ENCODE measurements at regions of chr20 and their contacts with region 1.

Region 1: DNA sequence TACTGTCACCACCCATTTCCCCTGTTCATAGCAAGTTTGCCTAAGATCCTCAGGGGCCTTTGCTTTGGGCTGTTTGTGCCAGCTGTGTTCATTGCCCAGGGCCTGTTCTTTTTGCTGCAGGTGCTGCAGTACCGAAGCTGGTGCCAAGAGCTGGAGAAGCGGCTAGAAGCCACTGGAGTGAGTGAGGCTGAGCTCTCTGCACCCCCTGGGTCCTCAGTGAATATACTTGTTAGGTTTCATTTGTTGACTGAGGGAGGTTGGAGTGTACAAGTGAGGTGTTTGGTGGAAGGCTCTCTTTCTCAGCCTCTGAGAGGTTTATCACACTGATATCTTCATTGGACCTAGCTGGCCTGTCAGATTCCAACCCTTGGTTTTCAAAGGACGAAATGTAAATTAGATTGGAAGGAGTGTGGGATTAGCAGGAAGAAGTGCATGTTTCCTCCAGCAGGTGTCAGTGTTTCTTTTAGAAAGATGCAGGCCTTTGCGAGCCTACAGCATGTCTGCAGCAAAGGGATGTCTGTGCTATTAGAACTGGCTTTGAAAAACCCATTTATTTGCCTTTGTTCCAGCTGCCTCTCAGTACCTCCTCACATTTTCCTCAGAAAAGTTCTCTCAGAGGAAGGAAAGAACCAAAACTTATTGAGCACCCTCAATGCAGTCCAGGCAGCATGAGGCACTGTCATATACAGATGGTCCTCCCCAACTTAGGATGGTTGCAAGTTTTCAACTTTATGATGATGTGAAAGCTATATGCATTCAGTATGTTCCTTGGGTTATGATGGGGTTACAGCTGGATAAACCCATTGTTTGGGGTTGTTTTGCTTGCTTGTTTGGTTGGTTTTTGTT is 8.3 kb downstream of the CEP250 start:
- DNase-seq: no peak
- ATAC-seq: peak; percentile 99
- H3K4me3 ChIP-seq: no peak overlapping the region
- H3K27ac ChIP-seq: no peak overlapping the region
- H3K4me1 ChIP-seq: no peaks in the 10 kb centered on the region
- H3K27me3 ChIP-seq: no peaks in the 10 kb centered on the region
- CTCF ChIP-seq: peak; percentile 74 to 84 (median 83)
- EP300 ChIP-seq: no peak
- POLR2A ChIP-seq: no peak
- RAD21 ChIP-seq: peak; percentile 80

Region 2: GRCh38 chr20:35447082-35447789 is 16.4 kb before region 1 on chr20:
- CTCF ChIA-PET with region 1: interaction called, 56 read pairs
- POLR2A ChIA-PET with region 1: no interaction called
- RAD21 ChIA-PET with region 1: no interaction called
- SMC1A ChIA-PET with region 1: interaction called, 3 read pairs
- in situ Hi-C with region 1: no loop called
- intact Hi-C with region 1: no loop called
- DNase-seq: peak; percentile 40
- ATAC-seq: peak; percentile 99
- H3K4me3 ChIP-seq: peak overlapping the region; percentile 80
- H3K27ac ChIP-seq: no peak overlapping the region
- H3K4me1 ChIP-seq: no peaks in the 10 kb centered on the region; the same call in 1 of the 2 replicates
- H3K27me3 ChIP-seq: no peaks in the 10 kb centered on the region
- CTCF ChIP-seq: peak; percentile 76 to 98 (median 93)
- EP300 ChIP-seq: no peak
- POLR2A ChIP-seq: no peak
- RAD21 ChIP-seq: peak; percentile 62

Region 3: DNA sequence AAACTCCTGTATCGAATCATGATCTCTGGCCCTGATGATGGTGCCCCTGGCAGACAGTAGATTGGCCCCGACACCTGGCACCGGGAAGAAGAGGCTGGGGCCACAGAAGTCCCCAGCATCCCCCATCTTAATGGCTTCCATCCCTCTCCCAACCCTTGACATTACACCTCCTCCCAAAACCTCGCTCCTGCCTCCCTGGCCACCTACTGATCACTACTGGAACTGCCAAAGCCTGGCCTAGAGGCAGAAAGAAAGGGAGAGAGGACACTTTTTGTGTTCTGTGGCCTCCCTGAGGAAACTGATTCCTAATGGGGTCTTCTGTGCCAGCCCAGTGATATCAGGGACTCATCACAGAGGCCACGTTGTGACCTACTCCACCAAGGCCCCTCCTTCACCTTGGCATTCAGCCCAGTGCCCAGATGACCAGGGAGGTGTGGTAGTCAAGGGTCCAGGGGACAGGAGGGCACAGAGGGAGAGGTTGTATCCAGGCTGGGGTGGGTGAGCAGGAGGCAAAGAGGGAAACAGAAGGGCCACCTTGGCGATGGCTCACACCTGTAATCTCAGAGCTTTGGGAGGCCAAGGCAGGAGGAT is 59.7 kb after region 1 on chr20:
- CTCF ChIA-PET with region 1: no interaction called
- POLR2A ChIA-PET with region 1: no interaction called
- RAD21 ChIA-PET with region 1: no interaction called
- SMC1A ChIA-PET with region 1: no interaction called
- in situ Hi-C with region 1: no loop called
- intact Hi-C with region 1: loop called (anchors 5 kb)
- DNase-seq: no peak
- ATAC-seq: peak; percentile 84
- H3K4me3 ChIP-seq: no peak overlapping the region
- H3K27ac ChIP-seq: no peak overlapping the region
- H3K4me1 ChIP-seq: no peaks in the 10 kb centered on the region
- H3K27me3 ChIP-seq: no peaks in the 10 kb centered on the region
- CTCF ChIP-seq: peak; percentile 40 to 76 (median 68)
- EP300 ChIP-seq: no peak
- POLR2A ChIP-seq: no peak
- RAD21 ChIP-seq: peak; percentile 57

Region 4: GRCh38 chr20:35601008-35601973 is 137.6 kb after region 1 on chr20:
- CTCF ChIA-PET with region 1: interaction called, 27 read pairs
- POLR2A ChIA-PET with region 1: no interaction called
- RAD21 ChIA-PET with region 1: interaction called, 3 read pairs
- SMC1A ChIA-PET with region 1: interaction called, 6 read pairs
- in situ Hi-C with region 1: no loop called
- intact Hi-C with region 1: no loop called
- DNase-seq: no peak
- ATAC-seq: peak; percentile 86
- H3K4me3 ChIP-seq: peak overlapping the region; percentile 57; the same call in 1 of the 2 replicates
- H3K27ac ChIP-seq: no peak overlapping the region
- H3K4me1 ChIP-seq: peaks cover 10% of the 10 kb centered on the region
- H3K27me3 ChIP-seq: peaks cover 9 to 11% of the 10 kb centered on the region in 2 experiments; a peak in 3 of 4 replicates
- CTCF ChIP-seq: peak; percentile 30 to 76 (median 49); a peak in 5 of 6 replicates
- EP300 ChIP-seq: no peak
- POLR2A ChIP-seq: no peak
- RAD21 ChIP-seq: peak; percentile 60

Region 5: GRCh38 chr20:35619196-35620095 is 155.8 kb after region 1 on chr20:
- CTCF ChIA-PET with region 1: interaction called, 8 read pairs
- POLR2A ChIA-PET with region 1: no interaction called
- RAD21 ChIA-PET with region 1: interaction called, 4 read pairs
- SMC1A ChIA-PET with region 1: interaction called, 7 read pairs
- in situ Hi-C with region 1: no loop called
- intact Hi-C with region 1: loop called (anchors 10 kb)
- DNase-seq: peak; percentile 45
- ATAC-seq: peak; percentile 69
- H3K4me3 ChIP-seq: peak overlapping the region; percentile 99
- H3K27ac ChIP-seq: no peak overlapping the region
- H3K4me1 ChIP-seq: peaks cover 25% of the 10 kb centered on the region
- H3K27me3 ChIP-seq: no peaks in the 10 kb centered on the region
- CTCF ChIP-seq: peak; percentile 74 to 87 (median 77)
- EP300 ChIP-seq: no peak
- POLR2A ChIP-seq: peak; percentile 61
- RAD21 ChIP-seq: peak; percentile 50

Region 6: DNA sequence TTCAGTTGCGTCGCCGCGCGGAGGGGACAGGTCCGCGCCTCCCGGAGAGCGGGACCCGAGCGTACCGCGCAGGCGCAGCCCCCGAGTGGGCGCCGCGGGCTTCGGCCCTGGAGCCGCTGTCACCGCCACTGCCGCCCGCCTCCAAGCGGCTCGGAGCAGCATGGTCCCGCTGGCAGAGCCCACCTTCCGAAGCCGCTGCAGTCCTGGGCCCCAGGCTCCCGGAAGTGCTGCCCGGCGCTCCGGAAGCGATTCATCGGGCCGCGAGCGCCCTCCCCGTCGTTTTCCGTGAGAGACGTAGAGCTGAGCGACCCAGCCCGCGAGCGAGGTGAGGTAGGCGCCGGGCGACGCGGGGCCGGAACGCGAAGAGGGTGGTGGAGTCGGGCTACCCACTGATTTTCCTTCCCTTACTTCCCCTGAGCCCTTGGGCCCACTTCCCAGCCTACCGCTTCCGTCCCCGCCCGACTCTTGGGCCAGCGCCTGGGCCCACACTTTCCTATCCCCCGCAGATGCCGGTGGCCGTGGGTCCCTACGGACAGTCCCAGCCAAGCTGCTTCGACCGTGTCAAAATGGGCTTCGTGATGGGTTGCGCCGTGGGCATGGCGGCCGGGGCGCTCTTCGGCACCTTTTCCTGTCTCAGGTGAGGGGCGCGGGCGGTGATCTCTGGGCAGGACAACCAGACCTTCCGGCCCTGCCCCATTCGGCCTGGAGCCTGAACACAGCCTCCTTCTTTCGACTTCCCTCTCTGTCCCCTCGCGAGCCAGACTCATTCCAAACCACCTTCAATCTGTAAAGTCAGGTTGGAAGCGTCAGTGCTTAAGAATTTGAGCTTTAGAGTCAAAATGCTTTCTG is 235.7 kb after region 1 on chr20 and contains the starts of genes NFS1 and ROMO1:
- CTCF ChIA-PET with region 1: interaction called, 3 read pairs
- POLR2A ChIA-PET with region 1: no interaction called
- RAD21 ChIA-PET with region 1: no interaction called
- SMC1A ChIA-PET with region 1: interaction called, 3 read pairs
- in situ Hi-C with region 1: no loop called
- intact Hi-C with region 1: loop called (anchors 2 kb)
- DNase-seq: peak; percentile 36
- ATAC-seq: peak; percentile 93
- H3K4me3 ChIP-seq: peak within 1 kb of the TSS; percentile 71
- H3K27ac ChIP-seq: peak within 1 kb of the TSS; percentile 87
- H3K4me1 ChIP-seq: peaks cover 11% of the 10 kb centered on the region; the same call in 1 of the 2 replicates
- H3K27me3 ChIP-seq: no peaks in the 10 kb centered on the region
- CTCF ChIP-seq: peak; percentile 13 to 24 (median 18); a peak in 3 of 6 replicates
- EP300 ChIP-seq: no peak
- POLR2A ChIP-seq: peak; percentile 90
- RAD21 ChIP-seq: no peak
- polyA plus RNA-seq, gene NFS1: 9.2 to 17.8 TPM
- polyA plus RNA-seq, gene ROMO1: 565 to 631 TPM

Region 7: DNA sequence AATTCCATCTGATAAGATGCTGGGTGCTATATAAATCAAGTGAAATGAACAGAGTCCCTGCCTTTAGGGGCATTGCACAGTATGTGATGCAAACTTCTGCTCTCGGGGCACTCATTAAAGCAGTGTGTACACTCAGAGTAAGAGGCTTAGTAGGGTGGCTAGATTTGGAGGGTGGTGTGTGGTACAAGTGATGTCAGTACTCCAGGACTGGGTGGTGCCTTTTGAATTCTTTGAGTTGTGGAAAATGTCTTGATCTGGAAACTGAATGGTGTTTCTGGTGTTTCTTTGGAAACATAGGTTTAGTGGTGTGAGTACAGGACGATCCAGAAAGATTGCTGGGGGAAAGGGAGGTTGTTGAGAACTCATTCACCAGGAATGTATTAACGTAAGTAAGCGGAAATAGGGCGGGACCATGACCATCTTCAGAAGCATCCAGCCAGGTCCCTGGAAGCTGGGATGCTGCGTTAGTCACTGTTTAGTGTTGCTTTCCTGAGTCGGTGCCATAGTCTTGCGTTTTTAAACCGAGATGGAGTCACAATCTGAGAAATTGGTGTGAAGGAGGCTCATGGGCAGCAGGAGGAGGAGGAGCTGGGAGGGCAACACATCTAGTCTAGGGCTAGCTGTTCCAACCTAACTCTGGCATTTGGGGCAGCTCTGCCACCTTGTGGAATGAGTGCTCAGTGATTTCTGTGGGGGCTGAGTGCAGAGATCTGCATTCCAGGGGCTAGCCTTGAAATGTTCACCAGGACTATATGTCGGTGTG is 420.3 kb after region 1 on chr20:
- CTCF ChIA-PET with region 1: interaction called, 26 read pairs
- POLR2A ChIA-PET with region 1: no interaction called
- RAD21 ChIA-PET with region 1: interaction called, 5 read pairs
- SMC1A ChIA-PET with region 1: interaction called, 4 read pairs
- in situ Hi-C with region 1: no loop called
- intact Hi-C with region 1: loop called (anchors 5 kb)
- DNase-seq: no peak
- ATAC-seq: peak; percentile 97
- H3K4me3 ChIP-seq: no peak overlapping the region
- H3K27ac ChIP-seq: no peak overlapping the region
- H3K4me1 ChIP-seq: no peaks in the 10 kb centered on the region
- H3K27me3 ChIP-seq: no peaks in the 10 kb centered on the region
- CTCF ChIP-seq: peak; percentile 66 to 82 (median 77)
- EP300 ChIP-seq: no peak
- POLR2A ChIP-seq: no peak
- RAD21 ChIP-seq: peak; percentile 80